Left colon (tissue), 2 donors: ENCODE measurements at regions of chr12 and their contacts with region 1.

Region 1: DNA sequence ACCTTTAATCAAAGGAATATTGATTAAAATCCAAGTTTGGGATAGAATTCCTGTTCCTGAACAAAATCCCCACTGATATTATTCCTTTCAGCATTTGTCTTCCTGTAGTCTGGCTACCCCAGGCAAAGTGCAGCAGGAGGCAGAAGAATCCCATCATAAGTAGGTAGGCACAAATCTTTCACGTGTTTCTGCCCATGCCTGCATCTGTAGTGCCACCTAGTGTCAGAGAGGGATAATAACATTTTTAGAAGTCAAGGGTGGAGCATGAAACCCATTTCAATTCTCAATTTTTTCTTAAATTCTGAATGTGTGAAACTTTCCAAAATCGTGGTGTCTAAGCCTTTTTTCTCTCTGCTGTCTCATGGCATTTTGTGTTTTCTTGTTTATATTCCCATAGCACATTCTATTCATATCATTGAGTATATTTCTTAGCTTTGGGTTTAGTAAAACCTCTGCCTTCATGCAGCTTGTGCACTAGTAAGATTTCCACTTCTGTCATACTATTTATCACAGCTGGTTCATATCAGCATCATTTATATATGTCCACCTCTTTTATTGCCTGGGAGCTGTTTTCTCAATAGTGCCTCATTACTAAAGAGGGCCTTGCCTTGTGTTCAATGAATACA is 47.8 kb upstream of the RERG start:
- DNase-seq: peak in 1 of 2 donors; percentile 32
- ATAC-seq: peak; percentile 77

Region 2: DNA sequence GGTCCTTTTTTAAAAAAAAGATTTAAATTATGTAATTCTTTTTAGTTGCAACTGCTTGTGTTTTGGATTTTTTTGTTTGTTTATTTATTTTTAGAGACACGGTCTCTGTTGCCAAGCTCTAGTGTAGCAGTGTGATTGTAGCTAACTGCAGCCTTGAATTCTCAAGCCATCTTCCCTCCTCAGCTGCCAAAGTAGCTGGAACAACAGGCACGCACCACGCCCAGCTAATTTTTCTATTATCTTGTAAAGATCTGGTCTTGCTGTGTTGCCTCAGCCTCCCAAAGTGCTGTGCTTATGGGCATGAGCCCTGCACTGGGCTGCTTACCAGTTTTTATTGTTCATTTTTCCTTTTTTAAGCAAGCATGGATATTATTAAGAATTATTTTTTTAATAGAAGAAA is 415.1 kb before region 1 on chr12:
- intact Hi-C with region 1: loop called in 1 of 2 experiments (anchors 2 kb)
- DNase-seq: no peak
- ATAC-seq: no peak

Region 3: DNA sequence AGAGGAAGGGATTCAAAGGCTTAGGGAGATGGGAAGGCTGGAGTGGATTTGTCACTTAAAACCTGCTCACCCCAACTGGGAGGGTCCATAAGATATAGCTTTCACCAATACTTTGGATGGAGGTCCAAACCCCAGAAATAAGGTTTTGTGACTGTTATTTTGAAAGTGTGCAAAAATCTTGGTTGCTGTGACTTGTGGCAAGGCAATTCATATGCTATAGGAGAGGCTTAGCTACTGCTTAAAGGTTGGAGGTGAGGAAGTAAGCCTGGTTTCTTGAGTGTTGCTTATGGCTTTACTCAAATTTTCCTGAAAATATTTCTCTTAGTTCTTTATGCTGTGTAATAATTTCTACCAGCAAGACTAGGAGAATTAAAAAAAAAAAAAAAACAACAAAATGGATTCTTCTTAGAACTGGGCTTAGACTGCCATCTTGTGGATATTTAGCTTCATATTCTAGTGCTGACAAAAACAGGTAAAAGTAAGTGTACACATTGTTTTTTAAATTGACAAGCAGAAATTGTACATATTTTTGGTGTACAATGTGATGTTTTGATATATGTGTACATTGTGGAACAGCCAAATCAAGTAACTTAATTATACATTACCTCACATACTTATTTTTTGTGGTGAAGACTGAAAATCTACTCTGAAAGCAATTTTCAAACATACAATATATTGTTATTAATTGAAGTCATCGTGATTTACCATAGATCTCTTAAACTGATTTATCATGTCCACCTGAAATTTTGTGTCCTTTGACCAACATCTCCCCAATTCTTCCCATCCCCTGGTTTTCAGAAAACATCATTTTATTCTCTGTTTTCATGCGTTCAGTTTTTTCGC is 273.2 kb before region 1 on chr12:
- intact Hi-C with region 1: loop called in 1 of 2 experiments (anchors 10 kb)
- DNase-seq: no peak
- ATAC-seq: peak; percentile 56

Region 4: DNA sequence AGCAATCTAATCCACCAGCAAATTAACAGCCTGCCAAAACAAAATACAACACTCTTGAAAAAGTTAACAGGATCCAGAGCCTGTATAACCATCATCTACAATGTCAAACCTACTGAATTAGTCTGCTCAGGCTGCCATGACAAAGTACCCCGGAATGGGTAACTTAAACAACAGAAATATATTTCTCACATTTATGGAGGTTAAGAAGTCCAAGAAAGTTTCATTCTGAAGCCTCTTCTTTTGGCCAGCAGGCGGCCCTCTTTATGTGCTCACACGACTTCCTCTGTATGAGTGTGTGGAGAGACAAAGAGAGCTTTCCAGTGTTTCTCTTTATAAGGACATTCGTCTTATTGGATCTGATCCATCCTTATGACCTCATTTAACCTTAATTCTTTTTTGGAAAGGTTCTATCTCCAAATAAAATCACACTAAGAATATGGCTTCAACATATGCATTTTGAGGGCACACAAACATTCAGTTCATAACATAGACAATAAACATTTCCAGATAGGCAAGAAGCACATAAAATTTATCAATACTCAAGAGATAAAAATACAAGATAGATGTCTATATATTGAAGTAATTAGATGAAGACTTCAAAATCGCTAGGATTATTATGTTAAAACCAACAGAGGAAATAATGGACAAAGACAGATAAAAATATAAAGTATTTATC is 41.9 kb before region 1 on chr12:
- intact Hi-C with region 1: loop called in 1 of 2 experiments (anchors 5 kb)
- DNase-seq: peak; percentile 42 to 66
- ATAC-seq: peak; percentile 74